T-cell (primary cell): ENCODE measurements at regions of chr14 and their contacts with region 1.

Region 1: DNA sequence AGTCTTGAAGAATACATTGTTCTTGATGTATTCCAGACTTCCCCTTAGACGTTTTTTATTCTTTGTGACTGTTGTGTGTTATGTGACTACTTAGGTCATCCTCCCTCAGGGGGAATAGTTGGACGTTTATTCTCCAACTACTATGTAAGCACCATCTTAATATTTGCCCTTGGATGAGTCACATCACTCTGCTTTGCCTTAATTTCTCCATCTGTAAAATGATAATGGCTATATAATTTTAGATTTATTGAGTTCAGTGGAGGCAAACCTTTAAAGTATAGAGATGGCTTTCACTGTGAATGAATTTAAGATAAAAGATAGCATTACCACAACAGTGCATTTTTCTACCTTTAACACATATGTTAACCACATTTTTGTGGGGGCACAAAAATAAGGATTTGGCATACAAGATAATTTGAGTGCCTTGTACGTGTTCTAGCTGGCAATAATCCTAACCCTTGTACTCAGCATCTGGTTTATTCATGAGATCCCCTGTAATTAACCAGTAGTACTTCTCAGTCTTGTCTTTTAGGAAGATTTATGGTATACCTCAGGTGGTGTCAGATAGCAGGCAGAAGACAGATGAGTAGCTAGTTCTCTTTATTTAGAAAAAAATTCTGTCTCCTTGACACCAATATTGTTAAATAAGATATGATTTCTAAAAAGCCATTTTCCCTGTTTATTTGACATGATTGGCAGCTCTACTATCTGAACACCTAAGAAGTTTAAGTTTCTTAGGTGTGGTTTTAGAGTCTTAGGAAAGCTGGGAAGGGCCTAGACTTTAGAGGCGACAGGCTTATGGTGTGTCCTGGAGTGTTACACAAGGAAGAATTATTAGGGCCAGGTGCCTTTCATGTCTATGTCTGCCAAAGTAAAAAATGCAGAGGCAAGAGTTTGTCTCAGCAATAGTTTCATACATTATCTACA is 152.3 kb downstream of the RAD51B start:
- DNase-seq: no peak
- ATAC-seq: no peak
- H3K4me3 ChIP-seq: no peak overlapping the region
- H3K4me3 Mint-ChIP-seq: no peak overlapping the region
- H3K27ac ChIP-seq: no peak overlapping the region
- H3K27ac Mint-ChIP-seq: no peak overlapping the region
- H3K4me1 ChIP-seq: no peaks in the 10 kb centered on the region
- H3K4me1 Mint-ChIP-seq: no peaks in the 10 kb centered on the region
- H3K27me3 ChIP-seq: no peaks in the 10 kb centered on the region
- H3K27me3 Mint-ChIP-seq: no peaks in the 10 kb centered on the region

Region 2: DNA sequence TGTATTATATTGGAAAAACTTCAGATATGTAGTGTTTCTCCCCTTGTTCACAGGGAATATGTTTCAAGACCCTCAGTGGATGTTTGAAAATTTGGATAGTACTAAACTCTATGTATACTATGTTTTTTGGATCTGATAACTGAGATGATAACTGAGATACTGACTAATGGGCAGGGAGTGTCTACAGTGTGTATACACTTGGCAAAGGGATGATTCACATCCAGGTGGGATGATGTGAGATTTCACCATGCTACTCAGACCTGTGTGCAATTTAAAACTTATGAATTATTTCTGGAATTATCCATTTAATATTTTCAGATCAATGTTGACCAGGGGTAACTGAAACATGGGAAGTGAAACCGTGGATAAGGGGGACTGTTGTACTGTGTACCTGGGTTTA is 138.5 kb before region 1 on chr14:
- CTCF ChIA-PET with region 1: interaction called in 1 of 2 experiments, 10 read pairs
- POLR2A ChIA-PET with region 1: no interaction called
- DNase-seq: no peak
- ATAC-seq: no peak
- H3K4me3 ChIP-seq: no peak overlapping the region
- H3K4me3 Mint-ChIP-seq: no peak overlapping the region
- H3K27ac ChIP-seq: no peak overlapping the region
- H3K27ac Mint-ChIP-seq: no peak overlapping the region
- H3K4me1 ChIP-seq: no peaks in the 10 kb centered on the region
- H3K4me1 Mint-ChIP-seq: no peaks in the 10 kb centered on the region
- H3K27me3 ChIP-seq: no peaks in the 10 kb centered on the region
- H3K27me3 Mint-ChIP-seq: no peaks in the 10 kb centered on the region

Region 3: DNA sequence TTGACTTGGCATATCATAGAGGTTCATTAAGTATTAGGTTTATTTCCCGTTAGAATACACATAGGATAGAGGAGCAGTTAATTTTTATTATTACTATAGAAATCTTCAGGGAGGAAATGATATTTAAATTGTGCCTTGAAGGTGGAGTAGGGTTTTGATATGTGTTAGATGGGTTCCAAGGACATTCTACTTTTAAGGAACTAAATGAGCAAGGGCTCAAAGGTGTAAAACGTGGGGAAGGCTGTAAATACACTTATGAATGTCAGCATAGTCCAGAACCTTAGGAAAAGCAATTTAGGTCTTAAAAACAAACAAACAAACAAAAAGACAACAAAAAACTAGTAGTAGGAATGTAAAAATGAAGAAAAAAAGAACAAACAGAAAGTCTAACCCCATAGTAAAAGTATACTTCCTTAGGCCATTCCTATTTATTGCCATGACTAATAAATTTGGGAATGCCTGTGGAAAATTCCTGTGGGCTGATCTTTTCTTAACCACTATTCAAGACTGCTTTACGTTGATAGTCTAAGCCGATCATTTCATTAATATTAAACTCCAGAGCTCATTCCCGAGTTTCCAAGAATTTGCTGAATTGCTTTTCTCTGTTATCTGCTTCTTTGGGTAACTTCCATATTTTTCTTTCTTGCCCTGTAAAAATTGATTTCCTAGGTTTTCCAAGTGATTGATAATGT is 27.9 kb after region 1 on chr14:
- CTCF ChIA-PET with region 1: no interaction called
- POLR2A ChIA-PET with region 1: no interaction called
- DNase-seq: no peak
- ATAC-seq: no peak
- H3K4me3 ChIP-seq: no peak overlapping the region
- H3K4me3 Mint-ChIP-seq: no peak overlapping the region
- H3K27ac ChIP-seq: no peak overlapping the region
- H3K27ac Mint-ChIP-seq: no peak overlapping the region
- H3K4me1 ChIP-seq: no peaks in the 10 kb centered on the region
- H3K4me1 Mint-ChIP-seq: no peaks in the 10 kb centered on the region
- H3K27me3 ChIP-seq: no peaks in the 10 kb centered on the region
- H3K27me3 Mint-ChIP-seq: no peaks in the 10 kb centered on the region